GM12878 (cell line): ENCODE measurements at regions of chr1 and their contacts with region 1.

Region 1: GRCh38 chr1:22704440-22705067 is 6.1 kb upstream of the EPHB2 start:
- DNase-seq: no peak
- ATAC-seq: peak; percentile 99
- H3K4me3 ChIP-seq: no peak overlapping the region
- H3K27ac ChIP-seq: no peak overlapping the region
- H3K4me1 ChIP-seq: peaks cover 9% of the 10 kb centered on the region
- H3K27me3 ChIP-seq: peaks cover 0 to under 1% of the 10 kb centered on the region in 2 experiments; a peak in 1 of 4 replicates
- CTCF ChIP-seq: peak; percentile 83 to 90 (median 88)
- EP300 ChIP-seq: no peak
- POLR2A ChIP-seq: no peak
- RAD21 ChIP-seq: peak; percentile 89

Region 2: GRCh38 chr1:22717037-22717760 is 12.6 kb after region 1 on chr1:
- CTCF ChIA-PET with region 1: interaction called, 32 read pairs
- POLR2A ChIA-PET with region 1: no interaction called
- RAD21 ChIA-PET with region 1: interaction called, 3 read pairs
- SMC1A ChIA-PET with region 1: interaction called, 6 read pairs
- in situ Hi-C with region 1: no loop called
- intact Hi-C with region 1: no loop called
- DNase-seq: no peak
- ATAC-seq: no peak
- H3K4me3 ChIP-seq: no peak overlapping the region
- H3K27ac ChIP-seq: no peak overlapping the region
- H3K4me1 ChIP-seq: peaks cover 17% of the 10 kb centered on the region
- H3K27me3 ChIP-seq: peaks cover 0 to 11% of the 10 kb centered on the region in 2 experiments
- CTCF ChIP-seq: no peak
- EP300 ChIP-seq: no peak
- POLR2A ChIP-seq: no peak
- RAD21 ChIP-seq: no peak

Region 3: DNA sequence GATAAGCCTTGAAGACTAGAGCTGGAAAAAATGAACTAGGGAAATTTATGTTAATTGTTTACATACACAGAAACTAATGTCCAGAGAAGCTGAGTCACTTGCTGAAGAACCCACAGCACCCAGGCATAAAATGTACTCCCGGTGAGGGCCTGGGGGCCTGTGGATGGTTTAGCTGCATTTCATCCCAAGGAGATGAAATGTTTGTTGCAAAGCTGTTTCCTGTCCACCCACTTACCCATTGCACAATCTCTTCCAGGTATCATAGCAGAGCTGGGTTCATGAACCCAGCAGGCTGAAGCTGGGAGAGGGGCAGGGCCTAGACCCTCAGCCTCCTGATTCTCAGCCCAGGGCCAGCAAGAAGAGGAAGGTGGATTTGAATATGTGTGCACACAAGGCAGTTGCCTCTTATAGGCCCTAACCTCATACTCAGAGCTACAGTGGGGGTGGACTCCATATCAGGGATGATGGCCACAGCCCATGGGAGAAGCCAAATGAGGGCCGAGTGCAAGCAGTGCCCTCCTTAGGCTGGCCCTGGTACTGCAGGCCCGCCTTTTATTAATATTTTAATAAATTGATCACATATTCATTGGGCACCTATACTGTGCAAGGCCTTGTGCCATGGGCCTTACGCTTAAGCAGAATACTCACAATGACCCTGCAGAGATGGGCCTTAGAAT is 157.3 kb after region 1 on chr1:
- CTCF ChIA-PET with region 1: interaction called, 47 read pairs
- POLR2A ChIA-PET with region 1: no interaction called
- RAD21 ChIA-PET with region 1: interaction called, 20 read pairs
- SMC1A ChIA-PET with region 1: interaction called, 10 read pairs
- in situ Hi-C with region 1: no loop called
- intact Hi-C with region 1: no loop called
- DNase-seq: no peak
- ATAC-seq: peak; percentile 17; the same call in 1 of the 3 replicates
- H3K4me3 ChIP-seq: no peak overlapping the region
- H3K27ac ChIP-seq: no peak overlapping the region
- H3K4me1 ChIP-seq: peaks cover 4% of the 10 kb centered on the region; the same call in 1 of the 2 replicates
- H3K27me3 ChIP-seq: no peaks in the 10 kb centered on the region; a peak in 1 of 4 replicates
- CTCF ChIP-seq: peak; percentile 40 to 72 (median 65)
- EP300 ChIP-seq: no peak
- POLR2A ChIP-seq: no peak
- RAD21 ChIP-seq: peak; percentile 55

Region 4: GRCh38 chr1:22930235-22930912 is 225.8 kb after region 1 on chr1:
- CTCF ChIA-PET with region 1: interaction called, 18 read pairs
- POLR2A ChIA-PET with region 1: no interaction called
- RAD21 ChIA-PET with region 1: interaction called, 8 read pairs
- SMC1A ChIA-PET with region 1: interaction called, 6 read pairs
- in situ Hi-C with region 1: no loop called
- intact Hi-C with region 1: loop called (anchors 1 kb)
- DNase-seq: no peak
- ATAC-seq: peak; percentile 76
- H3K4me3 ChIP-seq: no peak overlapping the region
- H3K27ac ChIP-seq: no peak overlapping the region
- H3K4me1 ChIP-seq: no peaks in the 10 kb centered on the region
- H3K27me3 ChIP-seq: no peaks in the 10 kb centered on the region; a peak in 1 of 4 replicates
- CTCF ChIP-seq: peak; percentile 65 to 74 (median 71)
- EP300 ChIP-seq: no peak
- POLR2A ChIP-seq: no peak
- RAD21 ChIP-seq: peak; percentile 66

Region 5: GRCh38 chr1:22969304-22969709 is 264.8 kb after region 1 on chr1:
- CTCF ChIA-PET with region 1: interaction called, 29 read pairs
- POLR2A ChIA-PET with region 1: no interaction called
- RAD21 ChIA-PET with region 1: interaction called, 8 read pairs
- SMC1A ChIA-PET with region 1: interaction called, 5 read pairs
- in situ Hi-C with region 1: no loop called
- intact Hi-C with region 1: loop called (anchors 1 kb)
- DNase-seq: no peak
- ATAC-seq: no peak
- H3K4me3 ChIP-seq: no peak overlapping the region
- H3K27ac ChIP-seq: no peak overlapping the region
- H3K4me1 ChIP-seq: no peaks in the 10 kb centered on the region
- H3K27me3 ChIP-seq: peaks cover 0 to 5% of the 10 kb centered on the region in 2 experiments; a peak in 3 of 4 replicates
- CTCF ChIP-seq: no peak
- EP300 ChIP-seq: no peak
- POLR2A ChIP-seq: no peak
- RAD21 ChIP-seq: no peak